Endothelial cell of umbilical vein (primary cell): ENCODE measurements at regions of chr11 and their contacts with region 1.

Region 1: GRCh38 chr11:94623120-94623735 is 56.1 kb downstream of the PIWIL4 start:
- DNase-seq: peak; percentile 89
- H3K4me3 ChIP-seq: no peak overlapping the region
- H3K27ac ChIP-seq: no peak overlapping the region
- H3K4me1 ChIP-seq: no peaks in the 10 kb centered on the region
- H3K27me3 ChIP-seq: no peaks in the 10 kb centered on the region
- CTCF ChIP-seq: peak; percentile 58 to 72
- POLR2A ChIP-seq: no peak

Region 2: GRCh38 chr11:94254214-94254613 is 369.0 kb before region 1 on chr11:
- CTCF ChIA-PET with region 1: no interaction called
- POLR2A ChIA-PET with region 1: no interaction called
- dilution Hi-C with region 1: no loop called
- intact Hi-C with region 1: no loop called
- DNase-seq: no peak
- H3K4me3 ChIP-seq: no peak overlapping the region
- H3K27ac ChIP-seq: no peak overlapping the region
- H3K4me1 ChIP-seq: no peaks in the 10 kb centered on the region
- H3K27me3 ChIP-seq: no peaks in the 10 kb centered on the region
- CTCF ChIP-seq: no peak
- POLR2A ChIP-seq: no peak

Region 3: GRCh38 chr11:94613120-94613519 is 10.1 kb before region 1 on chr11:
- CTCF ChIA-PET with region 1: interaction called, 16 read pairs
- POLR2A ChIA-PET with region 1: no interaction called
- dilution Hi-C with region 1: no loop called
- intact Hi-C with region 1: no loop called
- DNase-seq: no peak
- H3K4me3 ChIP-seq: no peak overlapping the region
- H3K27ac ChIP-seq: no peak overlapping the region
- H3K4me1 ChIP-seq: no peaks in the 10 kb centered on the region
- H3K27me3 ChIP-seq: no peaks in the 10 kb centered on the region
- CTCF ChIP-seq: no peak
- POLR2A ChIP-seq: no peak

Region 4: GRCh38 chr11:94757037-94757735 is 134.0 kb after region 1 on chr11:
- CTCF ChIA-PET with region 1: interaction called, 83 read pairs
- POLR2A ChIA-PET with region 1: no interaction called
- dilution Hi-C with region 1: no loop called
- intact Hi-C with region 1: loop called (anchors 1 kb)
- DNase-seq: no peak
- H3K4me3 ChIP-seq: no peak overlapping the region
- H3K27ac ChIP-seq: no peak overlapping the region
- H3K4me1 ChIP-seq: peaks cover 7% of the 10 kb centered on the region
- H3K27me3 ChIP-seq: no peaks in the 10 kb centered on the region
- CTCF ChIP-seq: no peak
- POLR2A ChIP-seq: no peak

Region 5: GRCh38 chr11:94786264-94787126 is 163.3 kb after region 1 on chr11:
- CTCF ChIA-PET with region 1: interaction called, 26 read pairs
- POLR2A ChIA-PET with region 1: no interaction called
- dilution Hi-C with region 1: no loop called
- intact Hi-C with region 1: no loop called
- DNase-seq: peak; percentile 63
- H3K4me3 ChIP-seq: no peak overlapping the region
- H3K27ac ChIP-seq: no peak overlapping the region
- H3K4me1 ChIP-seq: peaks cover 20% of the 10 kb centered on the region
- H3K27me3 ChIP-seq: no peaks in the 10 kb centered on the region
- CTCF ChIP-seq: peak; percentile 36 to 57
- POLR2A ChIP-seq: no peak

Region 6: GRCh38 chr11:94876645-94877442 is 253.6 kb after region 1 on chr11:
- CTCF ChIA-PET with region 1: interaction called, 22 read pairs
- POLR2A ChIA-PET with region 1: no interaction called
- dilution Hi-C with region 1: no loop called
- intact Hi-C with region 1: loop called (anchors 1 kb)
- DNase-seq: peak; percentile 94
- H3K4me3 ChIP-seq: no peak overlapping the region
- H3K27ac ChIP-seq: peak overlapping the region; percentile 75
- H3K4me1 ChIP-seq: peaks cover 14% of the 10 kb centered on the region
- H3K27me3 ChIP-seq: no peaks in the 10 kb centered on the region
- CTCF ChIP-seq: peak; percentile 28 to 32
- POLR2A ChIP-seq: no peak

Region 7: DNA sequence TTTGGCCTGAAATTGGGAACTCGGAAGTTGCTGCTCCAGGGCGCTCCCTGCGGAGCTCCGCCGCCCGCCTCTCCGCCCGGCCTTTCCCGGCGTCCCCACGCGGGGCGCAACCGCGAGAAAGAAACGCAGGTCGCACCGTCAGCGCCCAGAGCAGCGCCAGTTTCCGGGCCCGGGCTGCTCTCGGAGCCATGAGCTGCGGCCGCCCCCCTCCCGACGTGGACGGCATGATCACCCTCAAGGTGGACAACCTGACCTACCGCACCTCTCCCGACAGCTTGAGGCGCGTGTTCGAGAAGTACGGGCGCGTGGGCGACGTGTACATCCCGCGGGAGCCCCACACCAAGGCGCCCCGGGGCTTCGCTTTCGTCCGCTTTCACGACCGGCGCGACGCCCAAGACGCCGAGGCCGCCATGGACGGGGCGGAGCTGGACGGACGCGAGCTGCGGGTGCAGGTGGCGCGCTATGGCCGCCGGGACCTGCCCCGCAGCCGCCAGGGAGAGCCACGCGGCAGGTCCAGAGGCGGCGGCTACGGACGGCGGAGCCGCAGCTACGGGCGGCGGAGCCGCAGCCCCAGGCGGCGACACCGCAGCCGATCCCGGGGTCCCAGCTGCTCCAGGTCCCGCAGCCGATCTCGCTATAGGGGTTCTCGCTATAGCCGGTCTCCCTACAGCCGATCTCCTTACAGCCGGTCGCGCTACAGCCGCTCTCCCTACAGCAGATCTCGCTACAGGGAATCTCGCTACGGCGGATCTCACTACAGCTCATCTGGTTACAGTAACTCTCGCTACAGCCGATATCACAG is 444.0 kb after region 1 on chr11:
- CTCF ChIA-PET with region 1: interaction called, 13 read pairs
- POLR2A ChIA-PET with region 1: no interaction called
- dilution Hi-C with region 1: no loop called
- intact Hi-C with region 1: loop called (anchors 1 kb)
- DNase-seq: peak; percentile 79
- H3K4me3 ChIP-seq: peak overlapping the region; percentile 78 to 98 (median 79)
- H3K27ac ChIP-seq: peak overlapping the region; percentile 62
- H3K4me1 ChIP-seq: peaks cover 19% of the 10 kb centered on the region
- H3K27me3 ChIP-seq: peaks cover 1 to 6% of the 10 kb centered on the region in 2 experiments
- CTCF ChIP-seq: peak; percentile 48 to 77
- POLR2A ChIP-seq: peak; percentile 66

Region 8: DNA sequence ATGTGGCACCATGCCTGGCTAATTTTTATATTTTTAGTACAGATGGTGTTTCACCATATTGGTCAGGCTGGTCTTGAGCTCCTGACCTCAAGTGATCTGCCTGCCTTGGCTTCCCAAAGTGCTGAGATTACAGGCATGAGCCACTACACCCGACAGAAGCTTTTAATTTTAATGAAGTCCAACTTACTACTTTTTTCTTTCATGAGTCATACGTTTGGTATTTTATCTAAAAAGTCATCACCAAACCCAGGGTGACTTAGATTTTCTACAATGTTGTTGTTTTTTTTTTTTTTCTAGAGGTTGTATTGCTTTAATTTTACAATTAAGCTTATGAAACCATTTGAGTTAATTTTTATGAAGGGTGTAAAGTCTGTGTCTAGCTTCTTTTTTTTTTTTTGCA is 1801.5 kb after region 1 on chr11:
- CTCF ChIA-PET with region 1: interaction called, 7 read pairs
- POLR2A ChIA-PET with region 1: no interaction called
- dilution Hi-C with region 1: no loop called
- intact Hi-C with region 1: loop called (anchors 1 kb)
- DNase-seq: peak; percentile 51
- H3K4me3 ChIP-seq: no peak overlapping the region
- H3K27ac ChIP-seq: no peak overlapping the region
- H3K4me1 ChIP-seq: peaks cover 2% of the 10 kb centered on the region
- H3K27me3 ChIP-seq: peaks cover 0 to 17% of the 10 kb centered on the region in 2 experiments
- CTCF ChIP-seq: no peak
- POLR2A ChIP-seq: no peak